ENCODE measurements at regions of chr13 and their contacts with region 1.

Region 1: DNA sequence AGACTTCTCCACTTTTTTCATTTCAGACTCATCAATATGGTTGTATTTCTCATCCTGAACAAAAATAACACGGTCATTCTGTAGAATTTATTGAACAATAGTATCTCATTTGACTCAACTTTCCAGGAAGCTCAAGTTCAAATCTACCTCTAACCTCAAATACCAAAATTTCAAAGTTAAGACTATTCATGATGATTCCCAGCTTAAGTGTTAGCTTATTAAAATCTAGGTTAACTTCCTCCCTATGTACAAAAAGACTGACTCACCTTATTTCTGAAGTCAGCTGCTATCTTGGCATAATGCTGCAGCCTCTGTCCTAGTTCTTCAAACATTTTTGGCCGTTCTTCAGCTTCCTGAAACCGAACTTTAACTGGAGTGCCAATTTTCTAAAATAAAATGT is 23.2 kb downstream of the HSPH1 start:
- DNase-seq: no peak
- H3K4me3 ChIP-seq: no peak overlapping the region
- H3K27ac ChIP-seq: no peak overlapping the region
- H3K4me1 ChIP-seq: no peaks in the 10 kb centered on the region
- CTCF ChIP-seq: no peak

Region 2: DNA sequence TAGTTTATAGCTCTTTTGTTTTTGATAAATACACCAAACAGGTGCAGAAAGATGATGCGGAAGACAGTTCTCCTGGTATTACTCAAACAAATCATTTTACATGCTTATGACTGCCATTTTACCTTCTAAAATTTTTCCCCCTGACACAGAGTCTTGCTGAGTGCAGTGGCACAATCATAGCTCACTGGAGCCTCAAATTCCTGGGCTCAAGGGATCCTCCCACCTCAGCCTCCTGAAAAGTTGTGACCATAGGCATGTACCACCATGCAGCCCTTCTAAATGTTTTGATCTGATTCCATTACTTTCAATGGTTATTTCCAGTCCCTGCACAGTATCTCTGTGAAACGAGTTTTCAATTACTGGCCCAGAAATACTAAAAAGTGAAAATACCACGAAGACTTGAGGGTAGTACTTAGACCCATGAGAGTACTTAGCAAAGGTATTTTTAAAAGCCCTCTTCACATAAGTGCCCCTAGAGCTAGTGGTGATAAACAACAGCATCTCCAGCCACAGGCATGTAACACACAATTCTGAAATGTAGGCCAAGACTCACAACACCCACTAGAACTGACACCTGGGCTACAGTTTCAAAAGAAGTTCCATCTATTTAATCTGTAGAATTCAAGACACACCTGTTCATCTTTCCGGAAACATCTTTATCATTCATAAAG is 11.9 kb after region 1 on chr13:
- CTCF ChIA-PET with region 1: interaction called, 3 read pairs
- POLR2A ChIA-PET with region 1: interaction called, 23 read pairs
- intact Hi-C with region 1: no loop called
- DNase-seq: no peak
- H3K4me3 ChIP-seq: no peak overlapping the region
- H3K27ac ChIP-seq: no peak overlapping the region
- H3K4me1 ChIP-seq: no peaks in the 10 kb centered on the region
- CTCF ChIP-seq: no peak

Measured in OCI-LY7 (cell line).